Mammary epithelial cell (primary cell): ENCODE measurements at regions of chr9 and their contacts with region 1.

Region 1: GRCh38 chr9:24698881-24699518 is 153.3 kb upstream of the IZUMO3 start:
- DNase-seq: no peak
- H3K4me3 ChIP-seq: peak overlapping the region; percentile 3 to 31 (median 4)
- H3K27ac ChIP-seq: no peak overlapping the region
- H3K4me1 ChIP-seq: no peaks in the 10 kb centered on the region
- H3K27me3 ChIP-seq: no peaks in the 10 kb centered on the region
- CTCF ChIP-seq: no peak

Region 2: DNA sequence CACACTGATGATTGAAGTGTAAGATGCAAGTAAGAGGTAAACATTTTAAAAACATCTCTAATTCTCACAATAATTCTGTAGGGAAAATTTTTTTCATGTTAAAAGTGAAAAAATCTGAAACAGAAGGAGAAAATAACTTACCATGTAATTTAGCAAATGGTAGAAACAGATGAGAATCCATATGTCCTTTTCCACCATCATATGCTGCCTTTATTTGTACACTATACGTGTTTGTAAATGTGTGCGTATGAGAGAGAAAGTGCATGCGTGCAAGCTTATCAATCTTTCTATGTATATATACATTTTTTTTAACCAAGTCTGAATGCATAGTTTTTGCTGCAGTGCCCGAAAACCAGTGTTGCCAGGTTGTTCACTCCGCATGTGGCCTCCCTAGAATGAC is 340.0 kb before region 1 on chr9:
- CTCF ChIA-PET with region 1: no interaction called
- dilution Hi-C with region 1: no loop called
- in situ Hi-C with region 1: no loop called
- intact Hi-C with region 1: no loop called
- DNase-seq: no peak
- H3K4me3 ChIP-seq: no peak overlapping the region
- H3K27ac ChIP-seq: no peak overlapping the region
- H3K4me1 ChIP-seq: no peaks in the 10 kb centered on the region
- H3K27me3 ChIP-seq: no peaks in the 10 kb centered on the region
- CTCF ChIP-seq: no peak

Region 3: DNA sequence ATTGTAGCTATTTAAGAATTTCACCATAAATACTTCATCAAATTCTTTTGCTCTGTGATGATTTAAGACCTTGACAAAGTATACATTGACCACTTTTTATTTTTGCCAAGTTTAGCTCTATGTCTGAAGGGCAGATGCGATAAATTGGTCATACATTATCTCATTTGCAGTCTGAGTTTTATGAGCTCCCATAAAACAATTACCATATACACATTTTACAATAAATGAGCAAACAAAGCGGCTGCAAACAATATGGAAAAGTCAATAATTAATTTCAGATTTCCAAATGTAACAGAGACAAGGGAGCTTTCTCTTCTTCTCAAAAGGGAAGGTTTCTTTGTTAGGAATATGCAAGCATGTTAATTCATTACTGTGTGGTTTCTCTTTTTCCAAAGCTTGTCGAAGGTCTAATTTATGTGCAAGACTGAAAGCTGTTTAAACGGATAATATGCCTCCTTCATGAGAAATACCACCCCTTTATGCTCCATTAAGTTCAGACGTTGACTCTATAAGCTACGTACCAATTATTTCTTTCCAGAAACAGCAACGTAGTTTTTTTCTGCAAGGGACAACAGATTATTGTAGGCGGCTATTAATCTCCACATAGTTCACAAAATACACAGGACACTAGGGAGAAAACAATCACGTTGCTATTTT is 146.3 kb before region 1 on chr9:
- CTCF ChIA-PET with region 1: no interaction called
- dilution Hi-C with region 1: no loop called
- in situ Hi-C with region 1: loop called in 1 of 2 experiments (anchors 25 kb)
- intact Hi-C with region 1: no loop called
- DNase-seq: no peak
- H3K4me3 ChIP-seq: no peak overlapping the region
- H3K27ac ChIP-seq: no peak overlapping the region
- H3K4me1 ChIP-seq: no peaks in the 10 kb centered on the region
- H3K27me3 ChIP-seq: peaks cover 2% of the 10 kb centered on the region
- CTCF ChIP-seq: no peak

Region 4: DNA sequence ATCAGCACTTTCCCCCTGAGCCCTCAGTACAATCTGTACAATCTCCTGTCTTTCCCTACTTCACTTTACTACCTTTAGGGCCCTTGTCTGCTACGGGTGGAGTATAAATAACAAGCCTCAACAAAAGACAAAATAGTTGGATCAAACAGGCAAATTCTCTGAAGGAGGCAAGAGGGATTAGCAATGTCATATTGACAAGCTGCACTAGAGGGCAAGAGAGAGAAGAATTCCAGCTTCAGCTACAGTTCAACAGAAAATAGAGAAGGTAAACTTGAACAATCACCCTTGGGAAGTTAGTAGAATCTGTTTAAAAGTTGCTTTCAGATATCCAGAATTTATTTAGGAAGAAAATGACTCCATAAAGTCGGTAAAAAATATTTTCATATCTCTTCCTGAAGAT is 84.9 kb before region 1 on chr9:
- CTCF ChIA-PET with region 1: no interaction called
- dilution Hi-C with region 1: no loop called
- in situ Hi-C with region 1: no loop called
- intact Hi-C with region 1: no loop called
- DNase-seq: peak; percentile 21
- H3K4me3 ChIP-seq: no peak overlapping the region
- H3K27ac ChIP-seq: no peak overlapping the region
- H3K4me1 ChIP-seq: no peaks in the 10 kb centered on the region
- H3K27me3 ChIP-seq: peaks cover 2% of the 10 kb centered on the region
- CTCF ChIP-seq: peak; percentile 29 to 55